ENCODE measurements at regions of chr12 and their contacts with region 1.

Region 1: DNA sequence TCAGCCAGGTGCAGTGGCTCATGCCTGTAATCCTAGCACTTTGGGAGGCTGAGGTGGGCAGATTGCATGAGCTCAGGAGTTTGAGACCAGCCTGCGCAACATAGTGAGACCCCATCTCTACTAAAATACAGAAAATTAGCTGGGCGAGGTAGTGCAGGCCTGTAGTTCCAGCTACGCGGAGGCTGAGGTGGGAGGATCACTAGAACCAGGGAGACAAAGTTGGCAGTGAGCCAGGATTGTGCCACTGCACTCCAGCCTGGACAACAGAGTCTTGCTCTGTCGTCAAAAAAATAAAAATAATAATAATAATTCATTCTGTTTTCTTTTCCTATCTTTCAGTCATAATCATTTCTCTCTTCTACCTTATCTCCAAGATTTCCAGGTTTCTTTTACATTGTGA is 48.6 kb upstream of the USP44 start:
- DNase-seq: no peak
- H3K4me3 ChIP-seq: no peak overlapping the region
- H3K27ac ChIP-seq: no peak overlapping the region
- H3K4me1 ChIP-seq: no peaks in the 10 kb centered on the region
- H3K27me3 ChIP-seq: no peaks in the 10 kb centered on the region
- CTCF ChIP-seq: no peak
- POLR2A ChIP-seq: no peak

Region 2: GRCh38 chr12:94736004-94736403 is 863.9 kb before region 1 on chr12:
- intact Hi-C with region 1: loop called (anchors 5 kb)
- DNase-seq: no peak
- H3K4me3 ChIP-seq: no peak overlapping the region
- H3K27ac ChIP-seq: no peak overlapping the region
- H3K4me1 ChIP-seq: no peaks in the 10 kb centered on the region
- H3K27me3 ChIP-seq: no peaks in the 10 kb centered on the region
- CTCF ChIP-seq: no peak
- POLR2A ChIP-seq: no peak